ENCODE measurements at regions of chr18 and their contacts with region 1.

Region 1: GRCh38 chr18:70421471-70422390 is 132.9 kb downstream of the SOCS6 start:
- DNase-seq: peak; percentile 95

Region 2: GRCh38 chr18:70072678-70073077 is 349.1 kb before region 1 on chr18:
- in situ Hi-C with region 1: no loop called
- DNase-seq: no peak

Region 3: GRCh38 chr18:70322928-70323327 is 98.8 kb before region 1 on chr18:
- in situ Hi-C with region 1: loop called (anchors 5 kb)
- DNase-seq: peak; percentile 80